Lower leg skin (tissue), 4 donors: ENCODE measurements at regions of chr17 and their contacts with region 1.

Region 1: GRCh38 chr17:64399071-64399766 is 8.6 kb upstream of the PECAM1 start:
- DNase-seq: no peak
- H3K4me3 ChIP-seq: no peak overlapping the region
- CTCF ChIP-seq: no peak
- POLR2A ChIP-seq: no peak

Region 2: GRCh38 chr17:64369007-64369893 is 30.0 kb before region 1 on chr17:
- intact Hi-C with region 1: loop called (anchors 1 kb)
- DNase-seq: no peak
- H3K4me3 ChIP-seq: no peak overlapping the region
- CTCF ChIP-seq: no peak
- POLR2A ChIP-seq: no peak

Region 3: DNA sequence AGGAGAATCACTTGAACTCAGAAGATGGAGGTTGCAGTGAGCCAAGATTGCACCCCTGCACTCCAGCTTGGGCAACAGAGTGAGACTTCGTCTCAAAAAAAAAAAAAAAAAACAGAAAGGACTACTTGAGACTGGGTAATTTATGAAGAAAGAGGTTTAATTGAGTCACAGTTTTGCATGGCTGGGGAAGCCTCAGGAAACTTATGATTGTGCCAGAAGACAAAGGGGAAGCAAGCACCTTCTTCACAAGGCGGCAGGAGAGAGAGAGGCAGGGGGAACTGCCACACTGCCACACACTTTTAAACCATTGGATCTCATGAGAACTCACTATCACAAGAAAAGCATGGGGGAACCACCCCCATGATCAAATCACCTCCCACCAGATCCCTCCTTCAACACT is 40.7 kb after region 1 on chr17:
- intact Hi-C with region 1: no loop called
- DNase-seq: no peak
- H3K4me3 ChIP-seq: no peak overlapping the region
- CTCF ChIP-seq: no peak
- POLR2A ChIP-seq: no peak